AG04449 (cell line): ENCODE measurements at regions of chr15 and their contacts with region 1.

Region 1: GRCh38 chr15:34342737-34343575 is at the starts of genes NOP10 and NUTM1:
- DNase-seq: no peak
- H3K4me3 ChIP-seq: peak within 1 kb of the TSS; percentile 99
- CTCF ChIP-seq: peak; percentile 95

Region 2: GRCh38 chr15:33994005-33994615 is 348.8 kb before region 1 on chr15:
- CTCF ChIA-PET with region 1: no interaction called
- POLR2A ChIA-PET with region 1: no interaction called
- DNase-seq: no peak
- H3K4me3 ChIP-seq: no peak overlapping the region
- CTCF ChIP-seq: peak; percentile 64

Region 3: GRCh38 chr15:34203936-34204335 is 139.0 kb before region 1 on chr15:
- CTCF ChIA-PET with region 1: no interaction called
- POLR2A ChIA-PET with region 1: no interaction called
- DNase-seq: no peak
- H3K4me3 ChIP-seq: no peak overlapping the region
- CTCF ChIP-seq: no peak

Region 4: DNA sequence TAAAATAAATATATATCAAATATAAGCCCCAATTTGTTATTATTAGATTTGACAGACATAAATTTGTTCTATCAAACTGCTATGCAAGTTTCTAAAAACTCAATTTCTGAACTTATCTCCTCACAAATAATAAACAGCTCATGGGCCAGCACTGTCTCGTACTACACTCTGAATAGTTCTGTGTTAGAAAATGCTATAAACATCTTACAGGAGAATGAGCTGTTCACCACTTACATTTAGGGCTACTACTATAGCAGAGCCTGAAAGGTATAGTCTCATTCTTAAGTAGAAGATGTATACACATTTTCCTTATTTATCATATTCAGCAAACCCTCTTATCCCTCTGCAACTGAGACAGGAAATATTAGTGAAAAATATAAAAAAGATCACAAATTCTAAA is 18.0 kb before region 1 on chr15:
- CTCF ChIA-PET with region 1: interaction called, 10 read pairs
- POLR2A ChIA-PET with region 1: interaction called, 7 read pairs
- DNase-seq: no peak
- H3K4me3 ChIP-seq: no peak overlapping the region
- CTCF ChIP-seq: no peak

Region 5: GRCh38 chr15:34358367-34358766 is 15.4 kb after region 1 on chr15:
- CTCF ChIA-PET with region 1: interaction called, 29 read pairs
- POLR2A ChIA-PET with region 1: no interaction called
- DNase-seq: no peak
- H3K4me3 ChIP-seq: no peak overlapping the region
- CTCF ChIP-seq: no peak